ENCODE measurements at regions of chr3 and their contacts with region 1.

Region 1: GRCh38 chr3:129893581-129894070 is at the start of gene TMCC1:
- DNase-seq: peak; percentile 73 to 84 (median 76)
- H3K4me3 ChIP-seq: peak within 1 kb of the TSS; percentile 75 to 94 (median 80)
- H3K4me3 Mint-ChIP-seq: peak within 1 kb of the TSS; percentile 91 to 93
- H3K27ac ChIP-seq: peak within 1 kb of the TSS; percentile 75 to 93
- H3K27ac Mint-ChIP-seq: peak within 1 kb of the TSS; percentile 83 to 95 (median 92)
- H3K4me1 ChIP-seq: peaks cover 39 to 43% of the 10 kb centered on the region in 2 donors
- H3K4me1 Mint-ChIP-seq: peaks cover 40% of the 10 kb centered on the region
- H3K27me3 ChIP-seq: no peaks in the 10 kb centered on the region
- H3K27me3 Mint-ChIP-seq: no peaks in the 10 kb centered on the region
- CTCF ChIP-seq: no peak
- polyA plus RNA-seq, gene TMCC1: 5.0 to 10.2 (median 5.0) TPM

Region 2: DNA sequence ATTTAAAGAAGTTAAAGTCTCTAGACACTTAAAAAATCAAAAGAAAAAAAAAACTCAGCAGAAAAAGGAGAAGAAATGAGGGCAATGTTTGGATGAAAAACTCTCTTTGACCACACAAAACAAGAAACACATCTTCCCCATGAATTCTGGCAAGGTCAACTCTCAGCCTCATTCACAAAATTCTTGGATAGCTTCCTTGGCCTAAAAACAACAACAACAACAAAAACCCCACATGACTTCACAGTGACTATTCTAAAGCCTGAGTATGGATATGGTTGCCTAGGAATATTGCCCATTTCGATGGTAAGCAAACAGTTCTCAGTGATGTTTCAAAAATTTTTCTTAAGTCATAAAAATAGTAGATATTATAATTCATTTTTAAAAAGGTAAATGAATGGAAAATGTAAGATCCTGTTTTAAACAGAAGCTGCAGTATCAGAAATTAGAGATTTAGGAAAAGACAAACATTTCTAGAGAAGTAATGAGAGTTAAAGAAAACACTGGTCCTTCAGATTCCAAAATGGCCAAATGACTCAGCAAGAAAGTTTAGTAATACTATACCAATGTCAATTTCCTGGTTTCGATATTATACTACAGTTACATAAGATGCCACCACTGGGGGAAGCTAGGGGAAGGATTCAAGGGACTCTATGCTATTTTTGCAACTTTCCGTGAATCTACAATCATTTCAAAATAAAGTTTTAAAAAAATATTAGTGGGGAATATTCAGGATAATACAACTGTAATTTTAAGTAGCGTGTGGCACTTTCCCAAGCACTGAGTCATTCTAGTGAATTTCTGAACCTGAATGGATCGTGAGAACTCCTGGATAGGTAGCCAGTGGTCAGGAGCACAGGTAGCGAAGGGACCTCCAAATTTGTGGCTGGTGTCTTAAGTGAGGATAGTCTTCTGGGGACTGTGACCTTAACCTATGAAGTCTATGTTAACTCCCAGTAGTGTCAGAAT is 37.9 kb before region 1 on chr3:
- intact Hi-C with region 1: loop called in 1 of 2 experiments (anchors 5 kb)
- DNase-seq: peak; percentile 58 to 86 (median 79)
- H3K4me3 ChIP-seq: peak overlapping the region in 2 of 3 experiments; percentile 29 to 63
- H3K4me3 Mint-ChIP-seq: peak overlapping the region; percentile 30 to 50
- H3K27ac ChIP-seq: peak overlapping the region; percentile 69 to 84
- H3K27ac Mint-ChIP-seq: peak overlapping the region; percentile 87 to 97 (median 95)
- H3K4me1 ChIP-seq: peaks cover 26 to 30% of the 10 kb centered on the region in 2 donors
- H3K4me1 Mint-ChIP-seq: peaks cover 36% of the 10 kb centered on the region
- H3K27me3 ChIP-seq: no peaks in the 10 kb centered on the region
- H3K27me3 Mint-ChIP-seq: peaks cover 0 to 2% (median 0%) of the 10 kb centered on the region in 3 donors
- CTCF ChIP-seq: no peak

Region 3: GRCh38 chr3:130111185-130111864 is 217.7 kb after region 1 on chr3:
- intact Hi-C with region 1: loop called in 1 of 2 experiments (anchors 5 kb)
- DNase-seq: peak; percentile 96 to 99 (median 98)
- H3K4me3 ChIP-seq: peak overlapping the region; percentile 65 to 81 (median 71)
- H3K4me3 Mint-ChIP-seq: peak overlapping the region; percentile 85 to 93
- H3K27ac ChIP-seq: peak overlapping the region; percentile 80 to 87
- H3K27ac Mint-ChIP-seq: peak overlapping the region; percentile 98 to 100 (median 99)
- H3K4me1 ChIP-seq: peaks cover 13% of the 10 kb centered on the region in 2 donors
- H3K4me1 Mint-ChIP-seq: peaks cover 22% of the 10 kb centered on the region
- H3K27me3 ChIP-seq: no peaks in the 10 kb centered on the region
- H3K27me3 Mint-ChIP-seq: peaks cover 3 to 11% (median 10%) of the 10 kb centered on the region in 3 donors
- CTCF ChIP-seq: no peak